K562 (cell line): ENCODE measurements at regions of chr5 and their contacts with region 1.

Region 1: DNA sequence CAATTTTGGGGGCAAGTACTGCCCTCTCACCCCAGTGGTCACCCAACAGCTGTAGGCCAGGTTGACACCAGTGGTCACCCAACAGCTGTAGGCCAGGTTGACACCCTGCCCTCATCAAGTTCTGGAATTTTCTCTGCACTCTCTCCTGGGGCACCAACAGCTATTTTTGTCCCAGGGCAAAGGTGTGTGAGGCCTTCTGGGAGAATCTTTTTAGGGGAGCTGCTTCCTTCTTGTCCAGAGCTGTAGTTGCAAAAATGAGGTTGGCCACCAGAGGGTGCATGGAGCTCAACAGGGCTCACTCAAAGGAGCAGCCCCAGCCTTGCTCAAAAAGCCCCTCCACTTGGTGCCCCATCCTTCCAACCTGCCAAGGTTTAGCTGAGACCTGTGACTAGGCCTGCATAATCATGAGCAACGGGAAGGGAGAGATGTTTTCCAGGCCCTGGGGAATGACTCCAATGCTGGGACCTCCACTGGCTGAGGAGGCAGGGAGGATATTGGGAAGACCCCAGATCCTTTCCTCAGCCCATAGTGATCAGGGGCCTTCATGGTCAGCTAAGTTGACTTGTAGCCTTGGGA is 10.6 kb upstream of the P4HA2 start:
- DNase-seq: peak; percentile 64 to 86 (median 77)
- ATAC-seq: peak; percentile 94
- H3K4me3 ChIP-seq: no peak overlapping the region
- H3K27ac ChIP-seq: no peak overlapping the region
- H3K4me1 ChIP-seq: no peaks in the 10 kb centered on the region; a peak in 2 of 5 replicates
- H3K27me3 ChIP-seq: no peaks in the 10 kb centered on the region
- CTCF ChIP-seq: peak; percentile 80 to 87 (median 81)
- EP300 ChIP-seq: no peak
- POLR2A ChIP-seq: no peak
- RAD21 ChIP-seq: peak; percentile 41 to 86

Region 2: GRCh38 chr5:132227485-132228240 is 10.6 kb before region 1 on chr5 and contains the start of gene P4HA2:
- CTCF ChIA-PET with region 1: no interaction called
- POLR2A ChIA-PET with region 1: interaction called, 17 read pairs
- in situ Hi-C with region 1: no loop called
- intact Hi-C with region 1: no loop called
- DNase-seq: peak; percentile 91 to 96 (median 93)
- ATAC-seq: peak; percentile 98
- H3K4me3 ChIP-seq: peak within 1 kb of the TSS; percentile 76
- H3K27ac ChIP-seq: peak within 1 kb of the TSS; percentile 83
- H3K4me1 ChIP-seq: peaks cover 30 to 34% of the 10 kb centered on the region in 2 experiments
- H3K27me3 ChIP-seq: no peaks in the 10 kb centered on the region
- CTCF ChIP-seq: peak in 2 of 3 experiments; percentile 9 to 15; a peak in 2 of 6 replicates
- EP300 ChIP-seq: no peak
- POLR2A ChIP-seq: peak; percentile 71
- RAD21 ChIP-seq: no peak
- polyA plus RNA-seq, gene P4HA2: 17.9 to 29.2 TPM

Region 3: GRCh38 chr5:132260714-132261551 is 22.7 kb after region 1 on chr5:
- CTCF ChIA-PET with region 1: no interaction called
- POLR2A ChIA-PET with region 1: no interaction called
- in situ Hi-C with region 1: no loop called
- intact Hi-C with region 1: loop called (anchors 1 kb)
- DNase-seq: peak; percentile 54 to 86 (median 60)
- ATAC-seq: no peak
- H3K4me3 ChIP-seq: no peak overlapping the region
- H3K27ac ChIP-seq: peak overlapping the region; percentile 74; the same call in 2 of the 3 replicates
- H3K4me1 ChIP-seq: peaks cover 45 to 63% of the 10 kb centered on the region in 2 experiments
- H3K27me3 ChIP-seq: no peaks in the 10 kb centered on the region
- CTCF ChIP-seq: no peak
- EP300 ChIP-seq: peak; percentile 33; the same call in 1 of the 2 replicates
- POLR2A ChIP-seq: no peak
- RAD21 ChIP-seq: no peak

Region 4: DNA sequence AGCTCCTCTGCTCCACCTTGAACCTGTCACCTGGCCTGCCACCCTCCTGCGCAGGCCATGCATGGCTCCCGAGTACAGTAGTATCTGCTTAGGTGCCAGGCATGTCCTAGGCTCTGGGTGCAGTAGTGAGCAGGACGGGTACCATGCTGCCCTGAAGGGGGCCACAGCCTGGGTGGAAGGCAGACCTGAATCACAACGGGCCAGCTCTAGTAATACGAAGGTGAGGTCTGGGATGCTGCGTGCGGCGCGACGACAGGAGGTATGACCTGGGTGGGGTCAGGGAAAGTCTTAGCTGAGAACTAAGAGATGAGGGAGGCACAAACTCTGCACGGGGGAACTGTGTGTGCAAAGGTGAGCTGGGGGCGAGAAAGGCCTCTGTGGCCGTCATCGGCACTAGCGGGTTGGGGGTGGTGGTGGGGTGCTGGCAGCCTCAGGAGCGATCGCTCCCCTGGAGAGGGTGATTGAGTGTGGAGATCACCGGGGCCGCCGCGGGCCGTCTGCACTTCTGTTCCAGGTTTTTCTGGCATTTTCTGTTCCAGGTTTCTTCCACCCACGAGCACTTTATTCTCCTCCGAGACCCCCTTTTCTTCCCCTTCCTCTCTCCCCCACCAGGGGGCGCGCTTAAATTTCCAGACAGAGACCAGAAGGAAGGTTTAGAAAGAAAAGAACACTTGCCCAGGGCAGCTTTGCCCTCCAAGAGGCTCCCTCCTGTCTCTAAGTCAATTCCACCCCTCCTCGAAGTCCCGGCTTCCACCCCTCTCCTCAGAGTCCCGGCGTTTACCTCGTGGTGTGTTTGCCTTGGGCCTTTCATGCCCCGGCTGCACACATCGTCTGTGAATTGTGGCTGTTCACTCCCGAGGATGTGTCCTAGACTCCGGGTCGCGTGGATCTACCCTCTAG is 34.3 kb after region 1 on chr5:
- CTCF ChIA-PET with region 1: no interaction called
- POLR2A ChIA-PET with region 1: no interaction called
- in situ Hi-C with region 1: no loop called
- intact Hi-C with region 1: loop called (anchors 5 kb)
- DNase-seq: peak; percentile 59 to 85 (median 65)
- ATAC-seq: peak; percentile 82
- H3K4me3 ChIP-seq: no peak overlapping the region
- H3K27ac ChIP-seq: no peak overlapping the region
- H3K4me1 ChIP-seq: peaks cover 12 to 41% of the 10 kb centered on the region in 2 experiments; a peak in 4 of 5 replicates
- H3K27me3 ChIP-seq: no peaks in the 10 kb centered on the region
- CTCF ChIP-seq: peak; percentile 82 to 89 (median 84)
- EP300 ChIP-seq: no peak
- POLR2A ChIP-seq: no peak
- RAD21 ChIP-seq: peak; percentile 62 to 89

Region 5: GRCh38 chr5:132466433-132467286 is 228.4 kb after region 1 on chr5:
- CTCF ChIA-PET with region 1: no interaction called
- POLR2A ChIA-PET with region 1: no interaction called
- in situ Hi-C with region 1: no loop called
- intact Hi-C with region 1: no loop called
- DNase-seq: peak in 2 of 4 experiments; percentile 50 to 76
- ATAC-seq: peak; percentile 68
- H3K4me3 ChIP-seq: no peak overlapping the region
- H3K27ac ChIP-seq: peak overlapping the region; percentile 54; the same call in 1 of the 3 replicates
- H3K4me1 ChIP-seq: peaks cover 24 to 28% of the 10 kb centered on the region in 2 experiments
- H3K27me3 ChIP-seq: no peaks in the 10 kb centered on the region
- CTCF ChIP-seq: no peak
- EP300 ChIP-seq: 0 out of 2 replicates have a peak, but pooled peaks have one; percentile 22
- POLR2A ChIP-seq: no peak
- RAD21 ChIP-seq: peak in 1 of 2 experiments; percentile 34; a peak in 2 of 4 replicates

Region 6: GRCh38 chr5:132500931-132501630 is 262.8 kb after region 1 on chr5:
- CTCF ChIA-PET with region 1: no interaction called
- POLR2A ChIA-PET with region 1: no interaction called
- in situ Hi-C with region 1: no loop called
- intact Hi-C with region 1: loop called (anchors 2 kb)
- DNase-seq: peak; percentile 85 to 94 (median 91)
- ATAC-seq: peak; percentile 70
- H3K4me3 ChIP-seq: no peak overlapping the region
- H3K27ac ChIP-seq: no peak overlapping the region
- H3K4me1 ChIP-seq: peaks cover 26 to 41% of the 10 kb centered on the region in 2 experiments; a peak in 4 of 5 replicates
- H3K27me3 ChIP-seq: no peaks in the 10 kb centered on the region
- CTCF ChIP-seq: peak; percentile 91 to 94 (median 93)
- EP300 ChIP-seq: peak; percentile 26; the same call in 1 of the 2 replicates
- POLR2A ChIP-seq: no peak
- RAD21 ChIP-seq: peak; percentile 98 to 99